Activated T-helper 2 cell treated with anti-CD3 and anti-CD28 coated beads, Interferon-gamma antibody, Interleukin-2, Interleukin-4, amounts not matched to agents 10 μg/mL and 5 μg/mL and 100 μg/mL, durations not matched to agents 14 hours and 24 hours and 36 hours (primary cell): ENCODE measurements at regions of chr18 and their contacts with region 1.

Region 1: DNA sequence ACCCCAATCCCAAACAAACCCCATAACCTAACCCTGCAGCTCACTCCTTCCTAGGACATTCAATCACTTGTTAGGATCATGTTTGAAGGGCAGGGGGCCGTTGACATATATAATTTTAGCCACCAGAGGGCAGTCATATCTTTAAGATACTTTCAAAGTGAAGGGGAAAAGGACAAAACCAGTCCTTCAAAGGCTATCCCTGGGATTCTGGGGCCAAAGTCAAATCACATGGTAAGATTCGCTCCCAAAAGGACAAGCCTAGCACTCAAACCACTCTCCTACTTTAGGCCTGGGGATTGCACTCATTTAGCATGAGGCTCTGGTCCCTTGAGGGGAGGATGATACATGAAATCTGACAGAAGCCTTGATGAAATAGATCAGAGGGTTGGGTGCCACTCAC is 44.6 kb downstream of the HAUS1 start:
- DNase-seq: peak; percentile 33
- H3K4me3 Mint-ChIP-seq: no peak overlapping the region
- H3K27ac Mint-ChIP-seq: no peak overlapping the region
- H3K4me1 Mint-ChIP-seq: peaks cover 24% of the 10 kb centered on the region
- H3K27me3 Mint-ChIP-seq: no peaks in the 10 kb centered on the region

Region 2: GRCh38 chr18:46073474-46074331 is 75.1 kb before region 1 on chr18:
- intact Hi-C with region 1: no loop called
- DNase-seq: peak; percentile 38
- H3K4me3 Mint-ChIP-seq: no peak overlapping the region
- H3K27ac Mint-ChIP-seq: peak overlapping the region; percentile 20
- H3K4me1 Mint-ChIP-seq: peaks cover 39% of the 10 kb centered on the region
- H3K27me3 Mint-ChIP-seq: no peaks in the 10 kb centered on the region

Region 3: GRCh38 chr18:46134920-46135675 is 13.7 kb before region 1 on chr18:
- intact Hi-C with region 1: no loop called
- DNase-seq: no peak
- H3K4me3 Mint-ChIP-seq: no peak overlapping the region
- H3K27ac Mint-ChIP-seq: no peak overlapping the region
- H3K4me1 Mint-ChIP-seq: peaks cover 2% of the 10 kb centered on the region
- H3K27me3 Mint-ChIP-seq: no peaks in the 10 kb centered on the region

Region 4: DNA sequence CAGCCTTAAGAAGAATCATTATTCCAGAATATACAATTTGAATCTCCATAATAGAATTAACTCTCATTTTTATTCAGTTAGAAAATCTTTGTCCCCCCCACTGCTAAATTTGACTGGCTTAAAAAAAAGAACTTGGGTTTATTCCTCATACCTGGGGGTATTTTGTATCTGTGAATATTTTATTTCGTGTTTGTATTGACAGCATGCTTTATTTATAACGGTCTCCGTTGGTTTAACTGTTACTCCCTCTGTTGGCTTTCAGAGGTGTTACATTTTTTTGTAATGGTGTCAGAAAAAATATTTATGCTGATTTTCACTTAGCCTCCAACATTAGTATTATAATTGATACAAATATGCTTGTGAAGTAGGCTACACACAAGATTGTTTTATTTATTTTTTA is 64.5 kb after region 1 on chr18:
- intact Hi-C with region 1: loop called (anchors 2 kb)
- DNase-seq: no peak
- H3K4me3 Mint-ChIP-seq: no peak overlapping the region
- H3K27ac Mint-ChIP-seq: peak overlapping the region; percentile 46
- H3K4me1 Mint-ChIP-seq: peaks cover 70% of the 10 kb centered on the region
- H3K27me3 Mint-ChIP-seq: no peaks in the 10 kb centered on the region

Region 5: DNA sequence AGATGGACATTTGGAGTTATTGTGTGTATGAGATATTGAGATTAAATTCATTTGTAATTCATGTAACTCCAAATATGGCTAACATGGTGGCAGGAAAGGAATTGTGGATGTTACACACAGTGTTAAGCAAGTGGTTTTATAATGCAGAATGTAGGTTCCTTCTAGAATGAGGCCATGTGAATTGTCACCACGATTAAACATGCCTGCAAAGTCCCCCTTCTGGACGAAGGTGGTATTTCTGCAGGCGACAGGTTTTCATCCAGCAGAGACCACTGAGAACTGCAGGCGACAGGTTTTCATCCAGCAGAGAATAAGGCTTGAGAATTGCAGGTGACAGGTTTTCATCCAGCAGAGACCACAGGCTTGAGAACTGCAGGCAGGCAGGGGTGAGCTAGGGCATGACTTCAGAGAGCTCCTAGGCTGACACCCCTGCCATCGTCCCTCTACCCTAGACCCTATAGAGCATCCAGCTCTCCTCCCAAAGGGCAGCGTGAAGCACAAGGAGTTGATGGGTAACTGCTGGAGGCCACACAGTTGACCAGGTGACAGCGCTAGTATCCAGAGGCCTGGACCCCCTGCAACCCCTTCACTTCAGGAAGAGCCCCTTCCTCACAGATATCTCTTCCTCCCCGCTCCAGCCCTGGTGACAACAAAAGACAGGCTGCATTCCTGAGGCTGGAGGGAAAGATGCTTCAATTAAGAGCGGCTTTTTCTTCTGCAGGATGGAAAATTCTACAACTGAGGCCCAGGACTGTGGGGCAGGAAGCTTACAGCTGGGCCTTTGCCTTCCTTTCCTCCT is 332.4 kb after region 1 on chr18:
- intact Hi-C with region 1: loop called (anchors 2 kb)
- DNase-seq: peak; percentile 33
- H3K4me3 Mint-ChIP-seq: no peak overlapping the region
- H3K27ac Mint-ChIP-seq: no peak overlapping the region
- H3K4me1 Mint-ChIP-seq: no peaks in the 10 kb centered on the region
- H3K27me3 Mint-ChIP-seq: peaks cover 3% of the 10 kb centered on the region